ENCODE measurements at regions of chr2 and their contacts with region 1.

Region 1: DNA sequence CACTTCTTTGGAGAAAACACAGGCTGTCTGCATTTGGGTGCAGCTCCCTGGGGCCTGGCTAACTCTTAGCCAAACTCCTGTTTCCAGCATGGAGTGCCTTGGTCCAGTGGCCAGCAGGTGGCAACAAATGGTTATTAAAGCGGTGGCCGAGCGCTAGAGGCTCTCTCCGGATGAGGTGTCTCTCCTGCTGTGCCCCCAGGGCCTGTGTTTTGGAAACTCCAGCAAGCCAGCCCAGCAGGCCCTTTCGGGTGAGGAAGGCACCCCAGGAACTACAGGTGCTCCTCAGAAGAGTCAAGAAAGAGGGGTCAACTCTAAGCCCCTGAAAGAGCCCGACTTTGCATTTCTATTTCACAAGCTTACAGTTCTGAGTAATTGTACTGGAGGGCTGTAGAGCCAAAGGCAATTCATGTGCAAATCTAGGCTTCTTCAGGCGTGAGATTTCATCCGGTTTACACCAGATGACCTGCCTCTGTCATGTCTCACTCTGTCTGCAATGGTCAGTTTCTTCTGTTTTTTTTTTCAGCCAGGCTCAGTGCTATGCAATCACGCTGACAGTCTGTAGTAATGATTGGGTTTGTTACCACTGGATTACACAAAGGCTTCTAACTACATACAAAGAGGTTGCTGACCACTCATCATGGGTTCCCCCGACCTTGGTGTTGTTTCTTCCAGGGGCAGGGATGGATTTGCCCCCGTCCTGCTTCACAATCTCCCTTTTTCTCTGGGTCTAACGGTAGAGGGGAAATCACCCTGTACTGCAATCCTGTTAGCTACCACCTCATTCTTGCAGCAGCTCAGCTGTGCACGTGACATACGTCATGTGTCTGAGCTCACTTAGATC is 7.6 kb upstream of the CHRNA1 start:
- DNase-seq: peak; percentile 71 to 83
- ATAC-seq: peak; percentile 92 to 98 (median 96)
- H3K4me3 ChIP-seq: peak overlapping the region in 2 of 10 donors; percentile 16 to 18
- H3K27ac ChIP-seq: peak overlapping the region in 4 of 10 donors; percentile 4 to 51 (median 24)
- H3K4me1 ChIP-seq: peaks cover 0 to 19% (median 9%) of the 10 kb centered on the region in 9 donors
- H3K27me3 ChIP-seq: no peaks in the 10 kb centered on the region
- CTCF ChIP-seq: peak; percentile 67 to 91 (median 85)

Region 2: DNA sequence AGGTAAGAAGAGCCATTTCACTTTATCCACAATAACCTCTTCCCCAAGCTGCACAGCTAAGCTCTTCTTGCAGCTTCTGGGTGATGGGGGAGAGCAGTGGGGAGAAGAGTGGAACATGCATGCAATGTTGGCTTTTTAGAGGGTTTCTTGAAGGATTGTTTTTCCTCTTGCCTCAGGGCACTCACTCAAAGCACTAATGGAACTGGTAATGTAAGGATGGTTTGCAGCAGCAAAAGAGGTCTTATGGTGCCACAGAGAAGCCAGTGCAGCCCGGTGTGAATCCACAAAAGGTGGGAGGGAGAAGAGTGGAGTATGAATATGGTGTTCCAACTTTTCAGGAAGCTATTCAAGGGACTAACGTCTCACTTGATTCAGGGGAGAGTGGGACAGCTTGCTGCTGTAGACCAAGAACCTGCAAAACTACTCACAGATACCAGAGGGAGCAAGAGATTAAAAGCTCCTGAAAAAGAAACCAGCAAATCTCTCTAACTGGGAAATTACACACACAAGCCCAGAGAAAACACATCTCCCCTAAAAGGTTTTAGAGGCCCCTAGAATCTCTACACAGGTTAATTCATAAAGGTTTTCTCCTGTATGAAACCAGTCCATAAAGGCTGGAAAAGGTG is 116.9 kb after region 1 on chr2:
- intact Hi-C with region 1: loop called in 1 of 10 experiments (anchors 10 kb)
- DNase-seq: no peak
- ATAC-seq: no peak
- H3K4me3 ChIP-seq: no peak overlapping the region
- H3K27ac ChIP-seq: no peak overlapping the region
- H3K4me1 ChIP-seq: no peaks in the 10 kb centered on the region
- H3K27me3 ChIP-seq: no peaks in the 10 kb centered on the region
- CTCF ChIP-seq: no peak

Region 3: GRCh38 chr2:174985630-174986029 is 213.8 kb after region 1 on chr2:
- intact Hi-C with region 1: loop called (anchors 1 to 5 kb)
- DNase-seq: no peak
- ATAC-seq: no peak
- H3K4me3 ChIP-seq: peak overlapping the region in 1 of 10 donors; percentile 6
- H3K27ac ChIP-seq: no peak overlapping the region
- H3K4me1 ChIP-seq: peaks cover 0 to 4% (median 3%) of the 10 kb centered on the region in 9 donors
- H3K27me3 ChIP-seq: no peaks in the 10 kb centered on the region
- CTCF ChIP-seq: peak in 8 of 9 donors; percentile 33 to 73 (median 62)

Region 4: DNA sequence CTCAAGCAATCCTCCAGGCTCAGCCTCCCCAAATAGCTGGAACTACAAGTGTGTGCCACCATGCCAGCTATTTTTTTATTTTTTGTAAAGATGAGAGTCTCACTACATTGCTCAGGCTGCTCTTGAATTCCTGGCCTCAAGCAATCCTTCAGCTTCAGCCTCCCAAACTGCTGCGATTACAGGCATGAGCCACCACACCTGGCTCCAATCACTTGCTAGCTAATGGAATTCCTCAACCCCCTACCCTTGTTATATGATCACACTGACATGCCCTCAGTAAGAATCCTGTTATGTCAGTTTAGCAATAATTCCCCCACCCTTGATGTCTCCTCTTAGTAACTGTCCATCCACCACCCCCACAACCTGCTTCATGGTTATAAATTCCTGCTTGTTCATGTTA is 221.0 kb after region 1 on chr2:
- intact Hi-C with region 1: loop called in 5 of 10 experiments (anchors 1 to 5 kb)
- DNase-seq: no peak
- ATAC-seq: no peak
- H3K4me3 ChIP-seq: no peak overlapping the region
- H3K27ac ChIP-seq: no peak overlapping the region
- H3K4me1 ChIP-seq: peaks cover 0 to 29% (median 6%) of the 10 kb centered on the region in 9 donors
- H3K27me3 ChIP-seq: no peaks in the 10 kb centered on the region
- CTCF ChIP-seq: no peak